ENCODE measurements at regions of chr15 and their contacts with region 1.

Region 1: DNA sequence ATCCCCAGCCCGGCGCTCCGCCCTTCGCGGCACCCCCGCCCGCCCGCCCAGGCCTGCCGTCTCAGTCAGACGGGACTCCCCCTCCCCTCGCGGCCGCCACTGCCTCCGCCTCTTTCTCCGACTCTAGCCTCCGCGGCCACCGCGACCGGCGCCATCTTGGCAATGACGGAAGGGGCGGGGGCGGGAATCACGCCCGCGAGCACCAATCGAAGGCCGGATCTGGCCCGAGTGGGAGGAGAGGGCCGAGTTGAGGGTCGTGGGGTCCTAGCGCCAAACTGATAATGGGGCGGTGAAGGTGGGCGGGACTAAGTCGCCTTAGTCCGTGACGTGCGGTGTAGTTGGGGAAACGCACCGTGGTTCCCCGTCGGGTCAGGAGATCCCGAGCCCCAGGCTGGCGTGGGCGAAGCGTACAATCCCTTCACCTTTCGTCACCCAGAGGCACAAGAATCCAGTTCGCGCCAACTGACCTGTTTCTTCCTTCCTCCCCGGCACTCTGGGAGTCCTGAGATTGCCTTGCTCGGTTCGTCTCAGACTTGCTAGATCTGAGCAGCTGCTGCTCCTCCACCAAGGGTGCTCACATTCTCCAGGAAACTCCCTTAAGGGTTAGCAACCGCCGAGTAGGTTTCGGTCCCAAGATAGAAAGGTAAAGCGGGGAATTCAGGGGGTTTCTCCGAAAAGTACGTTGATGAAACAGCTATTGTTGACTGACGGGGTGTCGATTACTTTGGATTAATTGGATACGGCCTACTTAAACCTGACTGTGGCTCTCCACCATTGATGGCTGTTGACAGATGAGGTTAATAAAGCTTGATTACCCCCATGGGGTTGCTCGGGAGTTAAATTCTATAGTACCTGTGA is at the start of gene DENND4A:
- DNase-seq: peak; percentile 93
- ATAC-seq: peak; percentile 91
- H3K4me3 ChIP-seq: peak within 1 kb of the TSS; percentile 84 to 98 (median 88)
- H3K27ac ChIP-seq: peak within 1 kb of the TSS; percentile 87
- H3K4me1 ChIP-seq: peaks cover 49% of the 10 kb centered on the region
- H3K27me3 ChIP-seq: no peaks in the 10 kb centered on the region; a peak in 1 of 5 replicates
- CTCF ChIP-seq: peak; percentile 12; the same call in 1 of the 2 replicates
- EP300 ChIP-seq: 0 out of 4 replicates have a peak, but pooled peaks of 1 of the 2 experiments have one; percentile 3
- POLR2A ChIP-seq: peak; percentile 86 to 90
- RAD21 ChIP-seq: no peak
- total RNA-seq, gene DENND4A: 13.2 and 21.1 TPM in 2 replicates

Region 2: DNA sequence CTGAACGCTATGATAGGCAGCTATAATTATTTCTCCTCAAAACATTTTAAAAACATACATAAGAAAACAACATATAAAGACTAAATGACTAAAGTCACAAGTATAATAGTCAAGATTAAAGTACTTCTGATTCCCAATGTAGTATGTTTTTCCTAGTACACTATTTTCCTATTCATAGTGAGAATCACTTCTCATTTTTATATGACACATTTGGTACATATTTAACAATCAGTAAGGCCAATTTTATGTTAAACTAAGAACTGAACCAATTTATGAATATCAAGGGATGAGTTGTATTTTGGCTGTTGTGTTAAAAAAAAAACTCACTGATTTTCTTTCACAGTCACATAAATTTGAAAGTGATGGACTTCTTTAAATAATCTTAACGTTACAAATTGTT is 79.9 kb before region 1 on chr15:
- CTCF ChIA-PET with region 1: no interaction called
- POLR2A ChIA-PET with region 1: no interaction called
- in situ Hi-C with region 1: no loop called
- intact Hi-C with region 1: no loop called
- DNase-seq: no peak
- ATAC-seq: no peak
- H3K4me3 ChIP-seq: no peak overlapping the region
- H3K27ac ChIP-seq: no peak overlapping the region
- H3K4me1 ChIP-seq: no peaks in the 10 kb centered on the region
- H3K27me3 ChIP-seq: no peaks in the 10 kb centered on the region
- CTCF ChIP-seq: no peak
- EP300 ChIP-seq: no peak
- POLR2A ChIP-seq: no peak
- RAD21 ChIP-seq: no peak

Region 3: GRCh38 chr15:65738649-65739048 is 53.7 kb before region 1 on chr15:
- CTCF ChIA-PET with region 1: no interaction called
- POLR2A ChIA-PET with region 1: no interaction called
- in situ Hi-C with region 1: no loop called
- intact Hi-C with region 1: no loop called
- DNase-seq: no peak
- ATAC-seq: no peak
- H3K4me3 ChIP-seq: no peak overlapping the region
- H3K27ac ChIP-seq: no peak overlapping the region
- H3K4me1 ChIP-seq: peaks cover 2% of the 10 kb centered on the region
- H3K27me3 ChIP-seq: no peaks in the 10 kb centered on the region
- CTCF ChIP-seq: no peak
- EP300 ChIP-seq: no peak
- POLR2A ChIP-seq: no peak
- RAD21 ChIP-seq: no peak

Region 4: GRCh38 chr15:65804252-65804931 is 12.0 kb after region 1 on chr15:
- CTCF ChIA-PET with region 1: no interaction called
- POLR2A ChIA-PET with region 1: interaction called, 7 read pairs
- in situ Hi-C with region 1: no loop called
- intact Hi-C with region 1: loop called (anchors 1 kb)
- DNase-seq: peak; percentile 91
- ATAC-seq: peak; percentile 94
- H3K4me3 ChIP-seq: peak overlapping the region in 1 of 3 experiments; percentile 21; a peak in 1 of 6 replicates
- H3K27ac ChIP-seq: peak overlapping the region; percentile 64
- H3K4me1 ChIP-seq: peaks cover 55% of the 10 kb centered on the region
- H3K27me3 ChIP-seq: no peaks in the 10 kb centered on the region
- CTCF ChIP-seq: no peak
- EP300 ChIP-seq: peak; percentile 57 to 83; a peak in 3 of 4 replicates
- POLR2A ChIP-seq: no peak
- RAD21 ChIP-seq: no peak

Region 5: GRCh38 chr15:65824031-65824743 is 31.8 kb after region 1 on chr15:
- CTCF ChIA-PET with region 1: no interaction called
- POLR2A ChIA-PET with region 1: interaction called, 12 read pairs
- in situ Hi-C with region 1: no loop called
- intact Hi-C with region 1: loop called (anchors 2 kb)
- DNase-seq: peak; percentile 81
- ATAC-seq: peak; percentile 99
- H3K4me3 ChIP-seq: peak overlapping the region in 1 of 3 experiments; percentile 9; a peak in 1 of 6 replicates
- H3K27ac ChIP-seq: peak overlapping the region; percentile 52
- H3K4me1 ChIP-seq: peaks cover 55% of the 10 kb centered on the region
- H3K27me3 ChIP-seq: no peaks in the 10 kb centered on the region
- CTCF ChIP-seq: peak; percentile 83
- EP300 ChIP-seq: no peak
- POLR2A ChIP-seq: no peak
- RAD21 ChIP-seq: peak; percentile 66

Measured in HepG2 (cell line).